ENCODE measurements at regions of chr7 and their contacts with region 1.

Region 1: GRCh38 chr7:100221231-100221718 is 1.5 kb downstream of the PVRIG start:
- DNase-seq: peak; percentile 33 to 90 (median 87)
- ATAC-seq: peak; percentile 79
- H3K4me3 ChIP-seq: peak overlapping the region; percentile 81
- H3K4me3 Mint-ChIP-seq: peak overlapping the region; percentile 81 to 99 (median 97)
- H3K27ac ChIP-seq: peak overlapping the region; percentile 99
- H3K27ac Mint-ChIP-seq: peak overlapping the region; percentile 96 to 100 (median 99)
- H3K4me1 ChIP-seq: peaks cover 38 to 45% of the 10 kb centered on the region in 2 donors
- H3K4me1 Mint-ChIP-seq: peaks cover 35 to 74% (median 66%) of the 10 kb centered on the region in 7 donors
- H3K27me3 ChIP-seq: no peaks in the 10 kb centered on the region
- H3K27me3 Mint-ChIP-seq: no peaks in the 10 kb centered on the region

Region 2: GRCh38 chr7:99926321-99926720 is 295.0 kb before region 1 on chr7:
- CTCF ChIA-PET with region 1: no interaction called
- POLR2A ChIA-PET with region 1: no interaction called
- intact Hi-C with region 1: no loop called
- DNase-seq: no peak
- ATAC-seq: no peak
- H3K4me3 ChIP-seq: no peak overlapping the region
- H3K4me3 Mint-ChIP-seq: peak overlapping the region in 1 of 10 donors; percentile 19
- H3K27ac ChIP-seq: no peak overlapping the region
- H3K27ac Mint-ChIP-seq: no peak overlapping the region
- H3K4me1 ChIP-seq: peaks cover 0 to 16% of the 10 kb centered on the region in 2 donors
- H3K4me1 Mint-ChIP-seq: peaks cover 16 to 37% (median 33%) of the 10 kb centered on the region in 7 donors
- H3K27me3 ChIP-seq: no peaks in the 10 kb centered on the region
- H3K27me3 Mint-ChIP-seq: peaks cover 0 to 40% (median 14%) of the 10 kb centered on the region in 5 donors

Region 3: DNA sequence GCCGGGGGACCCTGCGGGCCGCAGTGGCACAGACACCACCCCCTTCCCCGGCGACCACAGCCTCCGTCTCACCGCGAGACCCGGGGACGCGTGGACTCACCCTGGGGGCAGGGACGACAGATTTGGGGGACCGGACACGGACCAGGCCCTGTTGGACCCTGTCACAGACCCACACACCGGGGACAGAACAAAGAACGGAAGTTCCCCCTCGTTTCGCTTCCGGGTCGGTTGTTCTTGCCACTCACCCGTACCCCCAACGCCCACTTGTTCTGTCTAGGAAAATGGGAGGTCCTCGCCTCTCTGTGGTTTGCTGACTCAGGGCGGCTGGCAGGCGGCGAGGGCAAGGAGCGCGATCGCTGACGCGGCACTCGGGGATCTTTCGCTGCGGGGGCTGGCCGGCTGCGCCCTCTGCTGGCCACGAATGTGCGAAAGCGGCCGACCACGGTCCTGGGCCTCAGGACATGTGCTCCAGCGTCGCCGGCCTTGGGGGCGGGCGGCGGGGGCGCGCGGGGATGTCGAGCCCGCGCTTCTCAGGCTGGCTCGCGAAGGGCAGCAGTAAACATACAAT is 139.7 kb before region 1 on chr7 and contains the start of gene ZNF3:
- CTCF ChIA-PET with region 1: no interaction called
- POLR2A ChIA-PET with region 1: no interaction called
- intact Hi-C with region 1: loop called in 1 of 2 experiments (anchors 1 kb)
- DNase-seq: peak; percentile 87 to 98 (median 97)
- ATAC-seq: peak; percentile 94
- H3K4me3 ChIP-seq: peak within 1 kb of the TSS; percentile 78
- H3K4me3 Mint-ChIP-seq: peak within 1 kb of the TSS; percentile 89 to 96 (median 92)
- H3K27ac ChIP-seq: peak within 1 kb of the TSS; percentile 82
- H3K27ac Mint-ChIP-seq: peak within 1 kb of the TSS; percentile 64 to 98 (median 91)
- H3K4me1 ChIP-seq: peaks cover 5 to 18% of the 10 kb centered on the region in 2 donors
- H3K4me1 Mint-ChIP-seq: peaks cover 26 to 46% (median 41%) of the 10 kb centered on the region in 7 donors
- H3K27me3 ChIP-seq: no peaks in the 10 kb centered on the region
- H3K27me3 Mint-ChIP-seq: peaks cover 0 to 19% (median 0%) of the 10 kb centered on the region in 5 donors
- total RNA-seq, gene ZNF3: 29.1 to 48.0 (median 35.0) TPM

Region 4: DNA sequence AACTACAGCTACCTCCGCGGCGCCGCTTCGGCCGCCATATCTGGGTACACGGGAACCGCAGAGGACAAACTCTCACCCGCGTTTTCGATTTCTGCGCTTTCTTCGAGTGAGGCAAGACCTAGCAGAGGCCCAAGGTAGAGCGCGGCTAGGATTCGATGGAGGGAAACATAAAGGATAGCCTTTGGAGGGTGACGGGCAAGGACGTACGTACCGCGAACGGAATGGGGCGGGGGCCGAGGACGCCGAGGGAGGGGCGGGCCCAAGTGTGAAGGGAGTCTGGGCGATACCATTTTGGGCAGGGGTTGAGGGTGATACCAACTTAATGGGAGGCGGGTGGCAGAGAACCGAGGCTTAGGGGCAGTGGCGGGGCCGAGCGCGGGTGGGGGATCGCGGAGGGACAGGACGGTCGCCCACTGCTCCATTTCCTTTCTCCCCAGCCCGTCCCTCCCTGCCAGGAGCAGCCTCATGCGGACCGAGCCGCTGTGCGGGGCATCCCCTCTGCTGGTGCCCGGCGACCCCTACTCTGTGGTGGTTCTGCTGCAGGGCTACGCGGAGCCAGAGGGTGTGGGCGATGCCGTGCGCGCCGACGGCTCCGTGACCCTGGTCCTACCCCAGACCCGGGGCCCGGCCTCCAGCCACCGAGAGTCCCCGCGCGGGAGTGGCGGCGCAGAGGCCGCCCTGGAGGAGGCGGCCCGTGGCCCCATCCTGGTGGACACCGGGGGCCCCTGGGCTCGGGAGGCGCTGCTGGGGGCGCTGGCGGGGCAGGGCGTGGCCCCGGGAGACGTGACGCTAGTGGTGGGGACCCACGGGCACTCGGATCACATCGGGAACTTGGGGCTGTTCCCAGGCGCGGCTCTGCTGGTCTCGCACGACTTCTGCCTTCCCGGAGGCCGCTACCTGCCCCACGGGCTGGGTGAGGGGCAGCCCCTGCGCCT is 94.1 kb before region 1 on chr7 and contains the start of gene MBLAC1:
- CTCF ChIA-PET with region 1: interaction called, 84 read pairs
- POLR2A ChIA-PET with region 1: interaction called, 17 read pairs
- intact Hi-C with region 1: loop called (anchors 1 kb)
- DNase-seq: peak; percentile 80 to 95 (median 91)
- ATAC-seq: peak; percentile 95
- H3K4me3 ChIP-seq: peak within 1 kb of the TSS; percentile 99
- H3K4me3 Mint-ChIP-seq: peak within 1 kb of the TSS; percentile 95 to 100 (median 98)
- H3K27ac ChIP-seq: peak within 1 kb of the TSS; percentile 98
- H3K27ac Mint-ChIP-seq: peak within 1 kb of the TSS; percentile 98 to 100 (median 99)
- H3K4me1 ChIP-seq: peaks cover 20 to 25% of the 10 kb centered on the region in 2 donors
- H3K4me1 Mint-ChIP-seq: peaks cover 13 to 46% (median 26%) of the 10 kb centered on the region in 7 donors
- H3K27me3 ChIP-seq: no peaks in the 10 kb centered on the region
- H3K27me3 Mint-ChIP-seq: no peaks in the 10 kb centered on the region
- total RNA-seq, gene MBLAC1: 4.5 to 6.3 (median 5.8) TPM

Region 5: GRCh38 chr7:100171087-100171681 is 50.1 kb before region 1 on chr7:
- CTCF ChIA-PET with region 1: interaction called, 5 read pairs
- POLR2A ChIA-PET with region 1: interaction called, 16 read pairs
- intact Hi-C with region 1: loop called in 1 of 2 experiments (anchors 2 kb)
- DNase-seq: peak in 3 of 9 donors; percentile 23 to 38 (median 25)
- ATAC-seq: peak; percentile 40
- H3K4me3 ChIP-seq: peak overlapping the region; percentile 56
- H3K4me3 Mint-ChIP-seq: peak overlapping the region; percentile 65 to 95 (median 90)
- H3K27ac ChIP-seq: peak overlapping the region; percentile 81
- H3K27ac Mint-ChIP-seq: peak overlapping the region in 8 of 9 donors; percentile 86 to 99 (median 95)
- H3K4me1 ChIP-seq: peaks cover 21 to 52% of the 10 kb centered on the region in 2 donors
- H3K4me1 Mint-ChIP-seq: peaks cover 51 to 78% (median 66%) of the 10 kb centered on the region in 7 donors
- H3K27me3 ChIP-seq: no peaks in the 10 kb centered on the region
- H3K27me3 Mint-ChIP-seq: peaks cover 0 to 27% (median 5%) of the 10 kb centered on the region in 5 donors

Region 6: GRCh38 chr7:100208911-100209408 is 12.3 kb before region 1 on chr7:
- CTCF ChIA-PET with region 1: interaction called, 7 read pairs
- POLR2A ChIA-PET with region 1: interaction called, 6 read pairs
- intact Hi-C with region 1: loop called in 1 of 2 experiments (anchors 1 kb)
- DNase-seq: peak in 6 of 9 donors; percentile 29 to 38 (median 34)
- ATAC-seq: peak; percentile 54
- H3K4me3 ChIP-seq: peak overlapping the region; percentile 45
- H3K4me3 Mint-ChIP-seq: peak overlapping the region; percentile 46 to 77 (median 74)
- H3K27ac ChIP-seq: peak overlapping the region; percentile 49
- H3K27ac Mint-ChIP-seq: peak overlapping the region; percentile 66 to 98 (median 87)
- H3K4me1 ChIP-seq: peaks cover 44 to 45% of the 10 kb centered on the region in 2 donors
- H3K4me1 Mint-ChIP-seq: peaks cover 39 to 56% (median 54%) of the 10 kb centered on the region in 7 donors
- H3K27me3 ChIP-seq: no peaks in the 10 kb centered on the region
- H3K27me3 Mint-ChIP-seq: no peaks in the 10 kb centered on the region

Region 7: GRCh38 chr7:100342765-100343164 is 121.5 kb after region 1 on chr7:
- CTCF ChIA-PET with region 1: interaction called, 11 read pairs
- POLR2A ChIA-PET with region 1: interaction called, 3 read pairs
- intact Hi-C with region 1: loop called (anchors 1 kb)
- DNase-seq: no peak
- ATAC-seq: no peak
- H3K4me3 ChIP-seq: no peak overlapping the region
- H3K4me3 Mint-ChIP-seq: no peak overlapping the region
- H3K27ac ChIP-seq: peak overlapping the region; percentile 38
- H3K27ac Mint-ChIP-seq: peak overlapping the region; percentile 49 to 90 (median 73)
- H3K4me1 ChIP-seq: peaks cover 4 to 9% of the 10 kb centered on the region in 2 donors
- H3K4me1 Mint-ChIP-seq: peaks cover 6 to 46% (median 34%) of the 10 kb centered on the region in 7 donors
- H3K27me3 ChIP-seq: no peaks in the 10 kb centered on the region
- H3K27me3 Mint-ChIP-seq: no peaks in the 10 kb centered on the region

Region 8: DNA sequence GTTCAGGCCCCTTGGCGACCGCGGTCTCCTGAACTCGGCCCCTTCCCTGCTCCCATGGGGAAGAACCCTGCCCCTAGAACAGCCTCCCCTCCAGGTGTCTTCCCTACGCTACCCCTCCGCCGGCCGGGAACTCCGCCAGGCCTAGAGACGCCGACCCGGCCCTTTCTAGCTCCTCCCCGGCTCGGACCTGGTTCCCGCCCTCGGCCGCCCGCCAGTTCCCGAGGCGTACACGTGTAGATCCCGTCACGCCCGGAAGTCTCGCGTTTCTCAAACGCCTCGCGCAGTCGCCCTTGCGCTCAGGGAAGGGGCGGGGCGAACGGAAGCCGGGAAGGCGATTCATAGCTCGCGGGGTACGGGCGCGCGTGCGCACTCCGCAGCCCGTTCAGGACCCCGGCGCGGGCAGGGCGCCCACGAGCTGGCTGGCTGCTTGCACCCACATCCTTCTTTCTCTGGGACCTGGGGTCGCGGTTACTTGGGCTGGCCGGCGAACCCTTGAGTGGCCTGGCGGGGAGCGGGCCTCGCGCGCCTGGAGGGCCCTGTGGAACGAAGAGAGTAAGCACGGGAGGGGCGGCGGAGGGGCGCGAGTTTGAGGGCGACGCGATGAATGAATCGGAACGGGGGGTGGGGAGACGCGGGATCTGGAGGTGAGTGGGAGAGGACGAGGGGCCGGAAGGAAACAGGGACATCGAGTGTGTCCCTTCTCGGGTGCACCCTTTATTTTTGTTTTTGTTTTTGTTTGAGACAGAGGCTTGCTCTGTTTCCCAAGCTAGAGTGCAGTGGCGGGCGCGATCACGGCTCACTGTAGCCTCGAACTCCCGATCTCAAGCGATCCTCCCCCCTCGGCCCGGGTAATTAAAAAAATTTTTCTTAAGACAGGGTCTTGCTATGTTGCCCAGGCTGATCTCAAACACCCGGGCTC is 484.7 kb after region 1 on chr7 and contains the start of gene POP7:
- CTCF ChIA-PET with region 1: no interaction called
- POLR2A ChIA-PET with region 1: no interaction called
- intact Hi-C with region 1: no loop called
- DNase-seq: peak; percentile 95 to 99 (median 97)
- ATAC-seq: peak; percentile 97
- H3K4me3 ChIP-seq: peak within 1 kb of the TSS; percentile 85
- H3K4me3 Mint-ChIP-seq: peak within 1 kb of the TSS; percentile 88 to 97 (median 95)
- H3K27ac ChIP-seq: peak within 1 kb of the TSS; percentile 91
- H3K27ac Mint-ChIP-seq: peak within 1 kb of the TSS; percentile 88 to 96 (median 93)
- H3K4me1 ChIP-seq: peaks cover 9 to 12% of the 10 kb centered on the region in 2 donors
- H3K4me1 Mint-ChIP-seq: peaks cover 8 to 15% (median 13%) of the 10 kb centered on the region in 7 donors
- H3K27me3 ChIP-seq: no peaks in the 10 kb centered on the region
- H3K27me3 Mint-ChIP-seq: peaks cover 0 to 13% (median 3%) of the 10 kb centered on the region in 5 donors
- total RNA-seq, gene POP7: 8.9 to 38.2 (median 15.0) TPM

Measured in naive thymus-derived CD4-positive, alpha-beta T cell (primary cell).